Ovary (tissue), 10 donors: ENCODE measurements at regions of chr6 and their contacts with region 1.

Region 1: GRCh38 chr6:110053395-110054240 is 75.5 kb downstream of the GPR6 start:
- DNase-seq: peak in 2 of 5 donors; percentile 23 to 53
- H3K4me3 ChIP-seq: no peak overlapping the region
- H3K27ac ChIP-seq: no peak overlapping the region
- H3K4me1 ChIP-seq: no peaks in the 10 kb centered on the region
- H3K27me3 ChIP-seq: no peaks in the 10 kb centered on the region
- CTCF ChIP-seq: peak; percentile 45 to 81 (median 58)
- EP300 ChIP-seq: no peak
- POLR2A ChIP-seq: no peak

Region 2: GRCh38 chr6:109526905-109527628 is 526.6 kb before region 1 on chr6:
- intact Hi-C with region 1: loop called in 1 of 4 experiments (anchors 10 kb)
- DNase-seq: peak in 1 of 5 donors; percentile 21
- H3K4me3 ChIP-seq: no peak overlapping the region
- H3K27ac ChIP-seq: no peak overlapping the region
- H3K4me1 ChIP-seq: no peaks in the 10 kb centered on the region
- H3K27me3 ChIP-seq: no peaks in the 10 kb centered on the region
- CTCF ChIP-seq: peak in 1 of 3 donors; percentile 26
- EP300 ChIP-seq: no peak
- POLR2A ChIP-seq: no peak

Region 3: DNA sequence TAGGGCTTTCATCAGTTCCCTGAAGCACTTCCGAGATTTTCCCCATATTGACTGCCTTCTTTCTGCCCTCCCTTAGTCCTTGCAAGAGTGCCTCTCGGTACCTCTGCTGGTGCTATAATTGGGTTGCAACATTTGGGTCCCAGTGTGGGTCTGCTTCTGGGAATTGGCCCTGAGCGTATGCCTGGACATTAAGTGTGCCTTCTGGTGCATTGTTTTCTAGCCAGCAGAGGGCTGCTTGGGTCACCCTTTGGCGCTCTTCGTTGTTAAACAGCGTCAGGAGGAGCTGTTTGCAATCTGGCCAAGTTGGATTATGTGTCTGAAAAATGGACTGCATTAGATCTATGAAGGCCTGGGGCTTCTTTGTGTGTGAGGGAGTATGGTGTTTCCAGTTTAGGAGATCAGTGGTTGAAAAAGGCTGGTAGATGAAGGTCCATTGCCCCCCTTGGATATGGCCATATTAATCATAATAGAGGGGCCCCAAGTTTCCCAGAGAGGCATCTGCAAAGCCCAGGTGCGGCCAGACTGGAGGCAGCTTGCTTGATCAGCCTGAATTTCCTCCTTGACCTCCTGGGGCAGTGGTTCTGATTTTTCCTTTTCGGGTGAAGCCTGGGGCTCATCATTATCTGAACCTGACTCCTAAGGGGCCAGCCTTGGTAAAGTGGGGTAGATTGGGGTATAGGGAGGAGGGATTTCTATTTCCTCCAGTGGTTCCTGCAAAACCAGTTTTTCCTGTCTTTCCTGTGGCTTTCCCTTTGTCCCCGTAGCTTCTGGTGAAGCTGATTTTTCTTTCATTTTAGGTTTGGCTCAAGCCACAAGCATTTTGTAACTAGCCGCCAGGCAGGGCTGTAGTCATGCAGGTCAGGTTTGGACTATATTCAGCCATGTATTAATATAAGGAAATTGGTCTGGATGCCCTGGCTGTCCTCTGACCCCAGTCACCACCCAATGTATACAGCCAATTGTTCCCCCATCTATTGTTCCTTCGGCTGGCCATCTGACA is 160.9 kb before region 1 on chr6:
- intact Hi-C with region 1: no loop called
- DNase-seq: no peak
- H3K4me3 ChIP-seq: no peak overlapping the region
- H3K27ac ChIP-seq: no peak overlapping the region
- H3K4me1 ChIP-seq: no peaks in the 10 kb centered on the region
- H3K27me3 ChIP-seq: no peaks in the 10 kb centered on the region
- CTCF ChIP-seq: no peak
- EP300 ChIP-seq: no peak
- POLR2A ChIP-seq: no peak

Region 4: DNA sequence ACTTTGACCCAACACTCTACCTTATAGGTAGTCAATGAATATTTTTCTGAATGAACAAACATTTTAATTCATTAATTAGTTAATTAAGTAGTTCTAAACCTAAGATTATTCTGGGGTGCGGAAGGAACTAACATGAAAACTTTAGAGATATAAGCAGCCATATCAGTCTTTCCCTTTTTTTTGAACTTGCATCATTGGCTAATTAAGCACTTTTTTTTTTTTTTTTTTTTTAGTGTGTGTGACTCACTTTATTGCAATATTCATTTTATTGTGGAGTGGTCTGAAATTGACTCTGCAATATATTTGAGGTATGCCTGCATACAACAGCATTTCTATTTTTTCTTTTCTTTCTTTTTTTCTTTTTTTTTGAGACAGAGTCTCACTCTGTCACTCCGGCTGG is 799.2 kb after region 1 on chr6:
- intact Hi-C with region 1: no loop called
- DNase-seq: no peak
- H3K4me3 ChIP-seq: no peak overlapping the region
- H3K27ac ChIP-seq: no peak overlapping the region
- H3K4me1 ChIP-seq: no peaks in the 10 kb centered on the region
- H3K27me3 ChIP-seq: no peaks in the 10 kb centered on the region
- CTCF ChIP-seq: no peak
- EP300 ChIP-seq: no peak
- POLR2A ChIP-seq: no peak

Region 5: GRCh38 chr6:111743862-111744692 is 1690.5 kb after region 1 on chr6:
- intact Hi-C with region 1: loop called in 1 of 4 experiments (anchors 5 kb)
- DNase-seq: peak in 1 of 5 donors; percentile 40
- H3K4me3 ChIP-seq: no peak overlapping the region
- H3K27ac ChIP-seq: no peak overlapping the region
- H3K4me1 ChIP-seq: peaks cover 8% of the 10 kb centered on the region
- H3K27me3 ChIP-seq: no peaks in the 10 kb centered on the region
- CTCF ChIP-seq: no peak
- EP300 ChIP-seq: no peak
- POLR2A ChIP-seq: no peak